GM12878 (cell line): ENCODE measurements at regions of chr17 and their contacts with region 1.

Region 1: GRCh38 chr17:45135192-45135977 is at the start of gene ACBD4:
- DNase-seq: peak; percentile 97
- ATAC-seq: peak; percentile 90
- H3K4me3 ChIP-seq: peak within 1 kb of the TSS; percentile 84
- H3K27ac ChIP-seq: peak within 1 kb of the TSS; percentile 28
- H3K4me1 ChIP-seq: peaks cover 8% of the 10 kb centered on the region
- H3K27me3 ChIP-seq: no peaks in the 10 kb centered on the region
- CTCF ChIP-seq: peak; percentile 100
- EP300 ChIP-seq: no peak
- POLR2A ChIP-seq: peak; percentile 73
- RAD21 ChIP-seq: peak; percentile 94
- polyA plus RNA-seq, gene ACBD4: 0.20 to 0.27 TPM

Region 2: DNA sequence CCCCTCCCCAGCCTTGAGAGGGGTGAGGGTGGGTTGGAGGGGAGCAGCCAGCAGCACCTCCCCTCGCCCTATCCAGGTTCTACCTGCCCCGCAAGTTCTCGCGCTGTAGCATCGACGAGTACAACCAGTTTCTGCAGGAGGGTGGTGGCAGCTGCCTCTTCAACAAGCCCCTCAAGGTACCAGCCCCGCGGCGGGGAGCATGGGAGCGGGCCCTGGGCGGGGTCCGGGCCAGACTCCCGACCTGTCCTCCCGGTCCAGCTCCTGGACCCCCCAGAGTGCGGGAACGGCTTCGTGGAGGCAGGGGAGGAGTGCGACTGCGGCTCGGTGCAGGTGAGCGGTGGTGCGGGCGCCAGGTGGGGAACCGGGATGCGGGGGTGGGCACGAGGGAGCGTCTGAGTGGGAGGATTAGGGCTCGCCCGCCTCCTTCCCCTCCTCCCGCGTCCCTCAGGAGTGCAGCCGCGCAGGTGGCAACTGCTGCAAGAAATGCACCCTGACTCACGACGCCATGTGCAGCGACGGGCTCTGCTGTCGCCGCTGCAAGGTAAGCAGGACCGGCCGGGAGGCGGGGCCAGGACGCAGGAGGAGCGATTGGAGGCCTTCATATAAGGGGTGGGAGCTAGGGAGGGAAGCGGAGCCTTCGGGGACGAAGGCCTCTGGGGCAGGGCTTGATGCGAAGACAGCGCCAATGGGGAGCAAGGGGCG is 360.1 kb before region 1 on chr17:
- CTCF ChIA-PET with region 1: interaction called, 14 read pairs
- POLR2A ChIA-PET with region 1: no interaction called
- RAD21 ChIA-PET with region 1: interaction called, 8 read pairs
- SMC1A ChIA-PET with region 1: interaction called, 5 read pairs
- in situ Hi-C with region 1: no loop called
- intact Hi-C with region 1: loop called (anchors 2 kb)
- DNase-seq: peak; percentile 91
- ATAC-seq: peak; percentile 96
- H3K4me3 ChIP-seq: peak overlapping the region; percentile 76; the same call in 1 of the 2 replicates
- H3K27ac ChIP-seq: no peak overlapping the region
- H3K4me1 ChIP-seq: peaks cover 6% of the 10 kb centered on the region; the same call in 1 of the 2 replicates
- H3K27me3 ChIP-seq: no peaks in the 10 kb centered on the region; a peak in 1 of 4 replicates
- CTCF ChIP-seq: no peak
- EP300 ChIP-seq: no peak
- POLR2A ChIP-seq: peak; percentile 69
- RAD21 ChIP-seq: no peak

Region 3: DNA sequence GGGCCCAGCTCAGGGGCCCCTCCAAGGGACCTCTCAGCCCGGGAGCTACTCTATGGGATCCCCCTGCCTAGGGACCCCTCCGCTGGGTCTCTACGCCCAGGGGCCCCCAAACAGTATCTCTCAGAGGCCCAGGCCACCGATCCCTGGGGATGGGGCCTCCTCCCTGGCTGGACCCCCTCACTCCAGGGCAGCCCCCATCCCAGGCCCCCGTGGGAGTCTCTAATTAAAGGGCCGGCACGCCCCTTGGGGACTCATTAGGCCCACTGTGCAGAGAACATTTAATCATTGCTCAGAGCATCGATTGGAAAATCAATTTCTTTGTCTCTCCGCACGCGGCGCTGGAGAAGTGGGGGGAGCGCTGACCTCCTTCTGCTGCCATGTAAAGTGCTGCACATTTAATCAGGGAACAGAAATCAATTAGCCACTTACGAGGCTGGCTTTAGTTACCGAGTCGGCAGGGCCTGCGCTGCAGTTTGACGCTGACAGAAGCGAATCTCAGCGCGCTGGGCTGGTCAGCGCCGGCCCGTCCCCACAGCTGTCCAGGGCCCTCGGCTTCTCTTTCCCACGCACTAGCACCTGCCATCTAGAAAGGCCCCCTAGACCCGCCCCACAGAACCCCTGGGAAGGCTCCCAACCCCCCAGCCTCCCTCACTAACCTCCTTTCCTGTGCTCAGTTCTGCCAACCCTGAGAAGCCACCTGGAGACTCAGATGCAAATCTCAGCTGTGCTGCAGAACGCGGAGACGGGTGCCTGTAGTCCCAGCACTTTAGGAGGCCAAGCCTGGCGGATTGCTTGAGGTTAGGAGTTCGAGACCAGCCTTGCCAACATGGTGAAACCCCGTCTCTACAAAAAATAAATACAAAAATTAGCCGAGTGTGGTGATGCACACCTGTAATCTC is 147.1 kb before region 1 on chr17:
- CTCF ChIA-PET with region 1: no interaction called
- POLR2A ChIA-PET with region 1: no interaction called
- RAD21 ChIA-PET with region 1: no interaction called
- SMC1A ChIA-PET with region 1: no interaction called
- in situ Hi-C with region 1: no loop called
- intact Hi-C with region 1: no loop called
- DNase-seq: no peak
- ATAC-seq: no peak
- H3K4me3 ChIP-seq: no peak overlapping the region
- H3K27ac ChIP-seq: no peak overlapping the region
- H3K4me1 ChIP-seq: peaks cover 17% of the 10 kb centered on the region
- H3K27me3 ChIP-seq: peaks cover 0 to 2% of the 10 kb centered on the region in 2 experiments; a peak in 1 of 4 replicates
- CTCF ChIP-seq: no peak
- EP300 ChIP-seq: no peak
- POLR2A ChIP-seq: no peak
- RAD21 ChIP-seq: no peak

Region 4: GRCh38 chr17:45021607-45022287 is 113.6 kb before region 1 on chr17:
- CTCF ChIA-PET with region 1: interaction called, 5 read pairs
- POLR2A ChIA-PET with region 1: no interaction called
- RAD21 ChIA-PET with region 1: interaction called, 4 read pairs
- SMC1A ChIA-PET with region 1: interaction called, 4 read pairs
- in situ Hi-C with region 1: no loop called
- intact Hi-C with region 1: loop called (anchors 2 kb)
- DNase-seq: no peak
- ATAC-seq: peak; percentile 86
- H3K4me3 ChIP-seq: no peak overlapping the region
- H3K27ac ChIP-seq: no peak overlapping the region
- H3K4me1 ChIP-seq: peaks cover 29% of the 10 kb centered on the region
- H3K27me3 ChIP-seq: peaks cover 0 to 6% of the 10 kb centered on the region in 2 experiments; a peak in 2 of 4 replicates
- CTCF ChIP-seq: peak; percentile 62 to 89 (median 74); a peak in 5 of 6 replicates
- EP300 ChIP-seq: no peak
- POLR2A ChIP-seq: peak; percentile 44; the same call in 1 of the 2 replicates
- RAD21 ChIP-seq: peak; percentile 74

Region 5: DNA sequence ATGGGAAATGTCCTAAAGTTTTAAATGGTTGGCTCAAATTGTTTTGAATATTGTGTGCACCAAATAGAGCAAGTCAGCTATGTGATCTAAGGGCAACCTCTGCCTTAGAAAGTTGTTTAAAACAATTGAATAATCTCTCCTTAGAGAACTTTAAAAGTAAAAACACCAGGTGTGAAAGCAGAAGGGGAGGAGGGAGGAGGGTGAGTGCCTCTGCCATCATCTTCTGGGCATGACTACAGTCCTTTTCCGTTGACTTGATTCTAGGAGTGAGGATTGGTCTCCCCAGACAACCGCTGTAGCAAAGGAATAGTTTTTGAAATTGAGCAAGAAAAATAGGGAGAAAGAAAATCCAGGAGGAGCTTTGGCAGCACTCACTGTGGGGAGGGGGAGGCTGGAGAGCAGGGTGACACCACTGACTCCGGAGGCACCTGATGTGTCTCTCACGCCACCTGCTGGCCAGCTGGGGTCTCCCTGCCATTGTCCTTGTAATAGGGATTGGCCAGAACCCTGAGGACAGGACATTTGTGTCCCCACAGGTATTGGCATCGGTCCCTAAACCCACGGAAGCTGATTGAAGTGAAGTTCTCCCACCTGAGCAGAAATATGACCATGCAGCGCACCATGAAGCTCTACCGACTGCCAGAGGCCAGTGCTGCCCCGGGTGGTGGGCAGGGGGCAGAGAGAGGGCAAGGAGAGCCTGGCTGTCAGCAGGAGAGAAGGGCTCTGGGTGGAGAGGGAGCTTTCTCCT is 36.3 kb before region 1 on chr17:
- CTCF ChIA-PET with region 1: interaction called, 10 read pairs
- POLR2A ChIA-PET with region 1: no interaction called
- RAD21 ChIA-PET with region 1: no interaction called
- SMC1A ChIA-PET with region 1: interaction called, 3 read pairs
- in situ Hi-C with region 1: no loop called
- intact Hi-C with region 1: no loop called
- DNase-seq: no peak
- ATAC-seq: peak; percentile 100
- H3K4me3 ChIP-seq: no peak overlapping the region
- H3K27ac ChIP-seq: no peak overlapping the region
- H3K4me1 ChIP-seq: no peaks in the 10 kb centered on the region
- H3K27me3 ChIP-seq: no peaks in the 10 kb centered on the region
- CTCF ChIP-seq: peak; percentile 88 to 93 (median 91)
- EP300 ChIP-seq: no peak
- POLR2A ChIP-seq: no peak
- RAD21 ChIP-seq: peak; percentile 70

Region 6: GRCh38 chr17:45155029-45155428 is 19.6 kb after region 1 on chr17:
- CTCF ChIA-PET with region 1: interaction called, 280 read pairs
- POLR2A ChIA-PET with region 1: interaction called, 49 read pairs
- RAD21 ChIA-PET with region 1: interaction called, 121 read pairs
- SMC1A ChIA-PET with region 1: interaction called, 81 read pairs
- in situ Hi-C with region 1: no loop called
- intact Hi-C with region 1: loop called (anchors 1 kb)
- DNase-seq: no peak
- ATAC-seq: no peak
- H3K4me3 ChIP-seq: no peak overlapping the region
- H3K27ac ChIP-seq: no peak overlapping the region
- H3K4me1 ChIP-seq: peaks cover 5% of the 10 kb centered on the region
- H3K27me3 ChIP-seq: no peaks in the 10 kb centered on the region
- CTCF ChIP-seq: no peak
- EP300 ChIP-seq: no peak
- POLR2A ChIP-seq: no peak
- RAD21 ChIP-seq: no peak

Region 7: GRCh38 chr17:45184144-45184543 is 48.8 kb after region 1 on chr17:
- CTCF ChIA-PET with region 1: interaction called, 16 read pairs
- POLR2A ChIA-PET with region 1: no interaction called
- RAD21 ChIA-PET with region 1: no interaction called
- SMC1A ChIA-PET with region 1: interaction called, 3 read pairs
- in situ Hi-C with region 1: no loop called
- intact Hi-C with region 1: no loop called
- DNase-seq: no peak
- ATAC-seq: no peak
- H3K4me3 ChIP-seq: no peak overlapping the region
- H3K27ac ChIP-seq: no peak overlapping the region
- H3K4me1 ChIP-seq: no peaks in the 10 kb centered on the region
- H3K27me3 ChIP-seq: no peaks in the 10 kb centered on the region
- CTCF ChIP-seq: no peak
- EP300 ChIP-seq: no peak
- POLR2A ChIP-seq: no peak
- RAD21 ChIP-seq: no peak

Region 8: DNA sequence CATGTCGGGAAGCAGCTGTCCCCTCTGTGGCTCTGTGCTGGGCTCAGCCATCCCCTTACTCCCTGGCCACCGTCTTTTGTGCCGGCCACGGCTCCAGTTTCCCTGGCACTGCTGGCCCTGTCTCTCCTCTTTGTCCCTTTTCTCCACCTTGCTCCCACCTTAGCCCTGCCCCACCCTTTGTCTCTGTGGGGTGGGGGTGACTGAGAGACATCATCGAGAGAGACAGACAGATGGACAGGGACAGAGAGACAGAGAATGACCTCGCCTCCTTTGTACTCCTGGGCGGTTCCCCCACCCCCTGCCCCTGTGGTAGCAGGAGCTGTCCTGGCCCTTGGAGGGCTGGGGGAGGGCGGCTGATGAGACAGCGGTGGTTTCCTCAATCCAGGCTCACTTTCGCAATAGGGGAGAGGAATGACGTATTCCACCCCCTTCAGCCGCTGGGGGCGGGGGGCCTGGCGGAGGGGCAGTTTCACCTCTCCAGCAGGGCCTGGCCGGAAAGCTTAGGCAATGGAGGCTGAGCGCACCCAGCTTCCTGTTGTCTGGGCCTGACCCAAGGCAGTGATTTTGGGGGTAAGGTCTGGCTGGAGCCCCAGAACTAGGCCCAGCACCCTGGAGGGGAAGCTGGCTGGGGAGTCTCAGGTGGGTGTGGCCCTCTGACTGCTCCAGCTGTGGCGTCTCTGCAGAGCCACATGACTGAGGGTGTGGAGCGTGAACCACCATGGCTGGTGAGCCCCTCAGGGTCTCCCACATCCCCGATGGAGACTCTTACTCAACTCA is 93.6 kb after region 1 on chr17:
- CTCF ChIA-PET with region 1: interaction called, 19 read pairs
- POLR2A ChIA-PET with region 1: no interaction called
- RAD21 ChIA-PET with region 1: interaction called, 9 read pairs
- SMC1A ChIA-PET with region 1: interaction called, 4 read pairs
- in situ Hi-C with region 1: no loop called
- intact Hi-C with region 1: no loop called
- DNase-seq: peak; percentile 68
- ATAC-seq: peak; percentile 56
- H3K4me3 ChIP-seq: peak overlapping the region; percentile 89
- H3K27ac ChIP-seq: peak overlapping the region; percentile 100
- H3K4me1 ChIP-seq: peaks cover 66% of the 10 kb centered on the region
- H3K27me3 ChIP-seq: no peaks in the 10 kb centered on the region
- CTCF ChIP-seq: no peak
- EP300 ChIP-seq: peak; percentile 84 to 91; a peak in 2 of 4 replicates
- POLR2A ChIP-seq: peak; percentile 75
- RAD21 ChIP-seq: no peak

Region 9: DNA sequence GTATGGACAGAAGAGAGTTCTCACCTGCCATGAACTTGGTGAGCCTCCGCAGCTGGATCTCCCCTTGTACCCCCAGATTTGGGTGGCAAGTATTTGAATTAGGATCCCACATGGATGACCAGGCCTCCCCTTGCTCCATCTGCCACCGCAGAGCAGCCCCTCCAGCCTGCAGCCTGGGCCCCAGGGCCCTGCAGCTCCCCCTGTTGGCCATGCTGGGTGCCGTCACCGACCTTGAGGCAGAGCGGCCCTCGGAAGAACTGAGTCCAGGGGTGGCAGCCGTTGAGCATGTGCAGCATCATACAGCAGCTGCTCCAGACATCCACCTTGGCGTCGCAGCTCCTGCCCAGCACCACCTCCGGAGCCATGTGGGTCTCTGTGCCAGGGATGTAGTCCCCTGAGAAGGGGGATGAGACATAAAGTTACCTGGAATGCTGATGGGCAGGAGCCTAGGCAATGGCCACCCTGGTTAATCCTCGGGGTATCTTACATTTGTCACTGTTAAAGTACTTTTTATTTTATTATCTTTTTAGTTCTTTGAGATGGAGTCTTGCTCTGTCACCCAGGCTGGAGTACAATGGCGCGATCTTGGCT is 135.5 kb after region 1 on chr17:
- CTCF ChIA-PET with region 1: no interaction called
- POLR2A ChIA-PET with region 1: no interaction called
- RAD21 ChIA-PET with region 1: no interaction called
- SMC1A ChIA-PET with region 1: no interaction called
- in situ Hi-C with region 1: no loop called
- intact Hi-C with region 1: no loop called
- DNase-seq: no peak
- ATAC-seq: peak; percentile 80
- H3K4me3 ChIP-seq: no peak overlapping the region
- H3K27ac ChIP-seq: no peak overlapping the region
- H3K4me1 ChIP-seq: 0 out of 2 replicates have a peak, but pooled peaks cover 4% of the 10 kb centered on the region
- H3K27me3 ChIP-seq: no peaks in the 10 kb centered on the region
- CTCF ChIP-seq: peak; percentile 45 to 82 (median 62)
- EP300 ChIP-seq: no peak
- POLR2A ChIP-seq: no peak
- RAD21 ChIP-seq: peak; percentile 44